ENCODE measurements at regions of chr7 and their contacts with region 1.

Region 1: DNA sequence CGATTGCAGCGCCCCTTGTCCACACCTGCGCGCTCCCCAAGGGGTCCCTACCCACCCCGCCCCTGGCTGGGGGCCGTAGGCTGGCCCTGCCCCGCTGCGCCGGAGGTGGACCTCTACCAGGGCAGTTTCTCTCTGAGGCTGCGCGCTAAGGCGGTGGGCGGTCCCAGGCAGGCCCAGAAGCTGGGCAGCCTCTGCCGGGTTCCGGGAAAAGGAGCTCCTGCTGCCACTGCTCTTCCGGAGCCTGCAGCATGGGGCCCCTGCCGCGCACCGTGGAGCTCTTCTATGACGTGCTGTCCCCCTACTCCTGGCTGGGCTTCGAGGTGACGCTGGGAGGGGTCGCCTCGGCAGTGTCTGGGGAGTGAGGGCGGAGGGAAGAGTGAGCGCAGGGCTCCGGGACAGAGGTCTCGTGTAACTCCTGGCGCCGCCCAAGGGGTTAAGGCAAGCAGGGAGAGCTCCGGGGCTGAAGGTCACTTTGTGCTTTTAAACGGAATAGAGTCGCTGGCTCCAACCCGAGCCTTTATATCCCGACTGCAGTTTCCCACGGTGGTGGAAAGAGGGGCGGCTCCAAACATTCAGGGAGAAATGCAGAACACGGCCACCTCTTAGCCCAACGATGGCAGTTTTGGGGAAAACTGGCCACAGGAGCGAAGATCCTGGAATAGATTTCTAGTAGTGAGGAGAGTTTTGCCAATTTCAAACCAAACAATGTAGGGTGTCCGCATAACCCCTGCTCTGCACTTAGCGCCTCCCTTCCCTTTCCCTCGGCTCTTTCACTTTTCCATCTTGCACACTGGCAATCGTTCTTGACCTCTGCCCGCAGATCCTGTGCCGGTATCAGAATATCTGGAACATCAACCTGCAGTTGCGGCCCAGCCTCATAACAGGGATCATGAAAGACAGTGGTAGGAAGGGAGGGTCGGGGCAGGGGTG is at the start of gene GSTK1:
- DNase-seq: peak; percentile 86
- H3K4me3 Mint-ChIP-seq: peak within 1 kb of the TSS; percentile 97
- H3K27ac Mint-ChIP-seq: peak within 1 kb of the TSS; percentile 87
- H3K4me1 Mint-ChIP-seq: peaks cover 73% of the 10 kb centered on the region
- H3K27me3 Mint-ChIP-seq: no peaks in the 10 kb centered on the region
- total RNA-seq, gene GSTK1: 502 to 518 TPM

Region 2: DNA sequence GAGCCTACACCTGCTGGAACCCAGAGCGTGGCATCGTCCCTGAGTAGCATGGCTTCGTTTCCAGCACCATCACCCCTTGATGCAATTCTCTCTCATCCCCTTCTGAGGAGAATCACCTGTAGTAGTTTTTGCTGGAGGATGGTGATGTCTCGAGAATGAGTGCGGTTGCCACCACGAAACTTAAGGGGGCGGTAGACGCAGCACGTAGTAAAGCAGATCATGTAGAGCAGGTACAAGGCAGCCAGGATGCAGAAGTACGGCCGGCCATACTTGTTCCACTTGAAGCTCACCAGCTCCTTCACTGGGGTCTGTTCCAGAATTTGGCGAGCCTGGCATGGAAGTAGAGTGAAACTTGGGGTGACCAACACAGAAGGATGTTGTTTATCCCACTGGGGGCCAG is 338.1 kb before region 1 on chr7:
- CTCF ChIA-PET with region 1: no interaction called
- POLR2A ChIA-PET with region 1: no interaction called
- DNase-seq: no peak
- H3K4me3 Mint-ChIP-seq: no peak overlapping the region
- H3K27ac Mint-ChIP-seq: no peak overlapping the region
- H3K4me1 Mint-ChIP-seq: no peaks in the 10 kb centered on the region
- H3K27me3 Mint-ChIP-seq: peaks cover 10% of the 10 kb centered on the region

Region 3: GRCh38 chr7:143248761-143249354 is 14.7 kb before region 1 on chr7:
- CTCF ChIA-PET with region 1: interaction called, 178 read pairs
- POLR2A ChIA-PET with region 1: interaction called, 51 read pairs
- DNase-seq: no peak
- H3K4me3 Mint-ChIP-seq: no peak overlapping the region
- H3K27ac Mint-ChIP-seq: no peak overlapping the region
- H3K4me1 Mint-ChIP-seq: peaks cover 87% of the 10 kb centered on the region
- H3K27me3 Mint-ChIP-seq: no peaks in the 10 kb centered on the region

Region 4: GRCh38 chr7:143305423-143306070 is 42.0 kb after region 1 on chr7:
- CTCF ChIA-PET with region 1: interaction called, 7 read pairs
- POLR2A ChIA-PET with region 1: interaction called, 11 read pairs
- DNase-seq: peak; percentile 76
- H3K4me3 Mint-ChIP-seq: no peak overlapping the region
- H3K27ac Mint-ChIP-seq: peak overlapping the region; percentile 61
- H3K4me1 Mint-ChIP-seq: peaks cover 75% of the 10 kb centered on the region
- H3K27me3 Mint-ChIP-seq: no peaks in the 10 kb centered on the region

Region 5: GRCh38 chr7:143490717-143491306 is 227.3 kb after region 1 on chr7:
- CTCF ChIA-PET with region 1: no interaction called
- POLR2A ChIA-PET with region 1: no interaction called
- DNase-seq: no peak
- H3K4me3 Mint-ChIP-seq: no peak overlapping the region
- H3K27ac Mint-ChIP-seq: no peak overlapping the region
- H3K4me1 Mint-ChIP-seq: peaks cover 19% of the 10 kb centered on the region
- H3K27me3 Mint-ChIP-seq: peaks cover 2% of the 10 kb centered on the region